Right cardiac atrium (tissue), 5 donors: ENCODE measurements at regions of chr2 and their contacts with region 1.

Region 1: GRCh38 chr2:72150157-72150865 is 2.6 kb upstream of the CYP26B1 start:
- DNase-seq: peak; percentile 69 to 84 (median 82)
- ATAC-seq: peak; percentile 75 to 80
- H3K4me3 ChIP-seq: peak overlapping the region; percentile 68
- H3K27ac ChIP-seq: no peak overlapping the region
- H3K4me1 ChIP-seq: peaks cover 3% of the 10 kb centered on the region
- H3K27me3 ChIP-seq: no peaks in the 10 kb centered on the region

Region 2: DNA sequence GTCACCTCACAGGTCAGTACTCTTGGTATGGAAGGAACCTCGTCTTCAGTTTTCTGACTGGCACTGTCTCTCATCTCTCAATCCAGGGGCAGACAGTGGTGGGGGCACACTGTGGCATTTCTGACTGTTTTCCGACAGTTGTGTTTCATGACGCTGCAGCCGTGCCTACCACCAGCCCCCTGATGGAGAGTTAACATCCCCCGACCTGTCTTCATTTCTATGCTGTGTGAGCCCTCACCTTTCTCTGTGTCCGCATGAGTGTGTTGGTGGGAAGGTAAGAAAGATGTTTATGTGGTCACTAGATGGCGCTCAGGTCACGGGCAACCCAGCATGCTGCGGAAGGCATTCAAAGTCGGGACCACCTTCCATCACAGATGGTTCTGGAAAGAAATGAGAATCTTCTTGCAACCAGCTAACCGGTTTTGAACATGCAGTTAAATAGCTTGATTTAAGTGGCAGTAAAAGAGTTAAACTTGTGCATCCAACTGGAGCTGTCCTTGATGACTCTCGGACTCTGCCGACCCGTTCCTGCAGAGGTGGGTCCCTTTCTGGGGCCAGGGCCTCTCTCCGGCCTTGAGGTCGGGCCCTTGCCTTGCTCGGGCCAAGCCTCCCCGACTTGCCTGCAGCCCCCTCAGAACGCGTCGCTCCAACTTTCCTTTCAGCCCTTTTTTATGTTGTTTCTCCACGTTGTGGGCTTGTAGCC is 604.6 kb before region 1 on chr2:
- intact Hi-C with region 1: loop called (anchors 2 to 5 kb)
- DNase-seq: peak in 2 of 3 donors; percentile 61 to 74
- ATAC-seq: peak; percentile 66 to 75
- H3K4me3 ChIP-seq: no peak overlapping the region
- H3K27ac ChIP-seq: peak overlapping the region; percentile 50
- H3K4me1 ChIP-seq: no peaks in the 10 kb centered on the region
- H3K27me3 ChIP-seq: no peaks in the 10 kb centered on the region

Region 3: GRCh38 chr2:71609958-71610357 is 540.4 kb before region 1 on chr2:
- intact Hi-C with region 1: loop called in 1 of 4 experiments (anchors 10 kb)
- DNase-seq: no peak
- ATAC-seq: no peak
- H3K4me3 ChIP-seq: no peak overlapping the region
- H3K27ac ChIP-seq: no peak overlapping the region
- H3K4me1 ChIP-seq: peaks cover 12% of the 10 kb centered on the region
- H3K27me3 ChIP-seq: no peaks in the 10 kb centered on the region

Region 4: GRCh38 chr2:71807975-71808451 is 342.3 kb before region 1 on chr2:
- intact Hi-C with region 1: loop called in 3 of 4 experiments (anchors 2 to 5 kb)
- DNase-seq: peak; percentile 82 to 92 (median 90)
- ATAC-seq: peak; percentile 94 to 96
- H3K4me3 ChIP-seq: no peak overlapping the region
- H3K27ac ChIP-seq: no peak overlapping the region
- H3K4me1 ChIP-seq: no peaks in the 10 kb centered on the region
- H3K27me3 ChIP-seq: no peaks in the 10 kb centered on the region

Region 5: DNA sequence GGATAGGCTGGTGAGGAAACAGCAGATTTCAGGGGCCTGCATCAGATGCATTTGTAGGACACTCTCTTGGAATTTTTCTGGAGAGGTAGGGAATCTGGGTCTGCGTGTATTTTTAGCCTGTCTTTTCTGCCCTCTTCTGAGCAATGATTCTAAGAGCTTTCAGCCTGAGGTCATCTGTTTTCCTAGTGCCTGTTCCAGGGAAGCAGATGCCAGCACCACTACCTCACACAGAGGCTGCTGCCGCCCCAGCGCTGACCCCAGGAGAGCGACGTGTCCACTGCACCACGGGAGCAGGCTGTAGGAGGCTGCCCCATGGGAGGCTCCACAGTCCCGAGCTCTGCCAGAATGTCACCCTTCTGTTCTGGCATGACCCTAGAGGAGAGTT is 319.1 kb before region 1 on chr2:
- intact Hi-C with region 1: no loop called
- DNase-seq: peak; percentile 70 to 82 (median 82)
- ATAC-seq: peak; percentile 78 to 83
- H3K4me3 ChIP-seq: no peak overlapping the region
- H3K27ac ChIP-seq: no peak overlapping the region
- H3K4me1 ChIP-seq: peaks cover 12% of the 10 kb centered on the region
- H3K27me3 ChIP-seq: no peaks in the 10 kb centered on the region

Region 6: GRCh38 chr2:71923887-71924533 is 226.3 kb before region 1 on chr2:
- intact Hi-C with region 1: loop called (anchors 5 to 10 kb)
- DNase-seq: peak; percentile 60 to 80 (median 68)
- ATAC-seq: peak; percentile 78 to 83
- H3K4me3 ChIP-seq: no peak overlapping the region
- H3K27ac ChIP-seq: no peak overlapping the region
- H3K4me1 ChIP-seq: no peaks in the 10 kb centered on the region
- H3K27me3 ChIP-seq: no peaks in the 10 kb centered on the region